Calu3 (cell line): ENCODE measurements at regions of chr12 and their contacts with region 1.

Region 1: GRCh38 chr12:59650402-59651228 is 54.8 kb downstream of the SLC16A7 start:
- DNase-seq: peak; percentile 35
- H3K4me3 Mint-ChIP-seq: peak overlapping the region; percentile 22
- H3K27ac Mint-ChIP-seq: peak overlapping the region; percentile 76
- H3K4me1 Mint-ChIP-seq: peaks cover 26% of the 10 kb centered on the region
- H3K27me3 Mint-ChIP-seq: no peaks in the 10 kb centered on the region
- CTCF ChIP-seq: no peak

Region 2: DNA sequence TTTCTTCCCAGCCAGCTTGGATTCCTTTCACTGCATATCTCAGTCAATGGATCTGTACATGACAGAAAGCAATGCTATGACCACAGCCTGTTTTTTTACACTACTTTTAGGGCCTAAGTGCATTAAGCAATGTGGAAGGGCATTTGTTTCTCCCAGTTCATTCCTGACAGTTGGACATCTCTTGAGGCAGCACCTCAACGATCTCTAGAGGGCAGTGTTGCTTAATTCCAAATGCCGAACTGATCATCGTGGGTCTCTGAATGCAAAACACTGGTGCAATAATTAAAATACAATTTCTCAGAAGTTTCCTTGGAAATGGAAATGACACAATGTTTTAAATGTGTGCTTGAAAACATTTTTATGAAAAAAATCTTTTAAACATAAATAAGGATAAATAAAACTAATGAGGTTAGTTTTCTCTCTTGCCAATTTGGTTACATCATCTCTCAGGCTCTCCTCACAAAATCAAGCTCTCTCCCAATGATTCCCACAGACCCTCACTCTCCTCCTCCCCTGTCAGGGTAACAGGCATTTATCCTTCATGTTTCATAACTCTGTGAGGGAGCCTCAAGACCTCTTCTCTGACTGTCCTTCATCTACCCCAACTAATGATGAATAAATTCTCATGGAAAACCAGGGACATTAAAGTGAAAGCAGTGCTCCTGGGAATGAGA is 247.2 kb before region 1 on chr12:
- CTCF ChIA-PET with region 1: no interaction called
- intact Hi-C with region 1: loop called (anchors 2 kb)
- DNase-seq: peak; percentile 60
- H3K4me3 Mint-ChIP-seq: peak overlapping the region; percentile 44
- H3K27ac Mint-ChIP-seq: peak overlapping the region; percentile 82
- H3K4me1 Mint-ChIP-seq: peaks cover 11% of the 10 kb centered on the region
- H3K27me3 Mint-ChIP-seq: no peaks in the 10 kb centered on the region
- CTCF ChIP-seq: peak; percentile 71

Region 3: DNA sequence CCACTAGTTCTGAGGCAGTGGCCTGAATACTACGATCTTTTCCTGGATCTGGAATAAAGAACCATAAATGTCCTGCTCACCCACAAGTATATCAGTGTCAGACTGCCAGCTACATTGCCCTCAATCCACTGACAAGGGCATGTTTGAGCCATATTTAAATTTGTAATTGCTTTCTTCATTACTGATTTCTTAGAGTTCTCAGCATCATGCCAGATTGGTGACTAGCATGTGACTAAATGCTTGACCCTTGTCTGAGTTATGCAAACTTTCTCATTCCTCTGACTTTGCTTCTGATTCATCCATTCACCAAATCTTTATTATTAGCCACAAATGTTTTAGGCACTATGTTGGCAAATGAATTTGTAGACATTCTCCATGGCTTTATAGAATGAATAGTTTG is 198.4 kb before region 1 on chr12:
- CTCF ChIA-PET with region 1: no interaction called
- intact Hi-C with region 1: loop called (anchors 2 kb)
- DNase-seq: peak; percentile 37
- H3K4me3 Mint-ChIP-seq: no peak overlapping the region
- H3K27ac Mint-ChIP-seq: peak overlapping the region; percentile 57
- H3K4me1 Mint-ChIP-seq: peaks cover 38% of the 10 kb centered on the region
- H3K27me3 Mint-ChIP-seq: no peaks in the 10 kb centered on the region
- CTCF ChIP-seq: no peak

Region 4: GRCh38 chr12:59499774-59500173 is 150.8 kb before region 1 on chr12:
- CTCF ChIA-PET with region 1: no interaction called
- intact Hi-C with region 1: loop called (anchors 2 kb)
- DNase-seq: no peak
- H3K4me3 Mint-ChIP-seq: no peak overlapping the region
- H3K27ac Mint-ChIP-seq: peak overlapping the region; percentile 50
- H3K4me1 Mint-ChIP-seq: peaks cover 31% of the 10 kb centered on the region
- H3K27me3 Mint-ChIP-seq: no peaks in the 10 kb centered on the region
- CTCF ChIP-seq: no peak

Region 5: DNA sequence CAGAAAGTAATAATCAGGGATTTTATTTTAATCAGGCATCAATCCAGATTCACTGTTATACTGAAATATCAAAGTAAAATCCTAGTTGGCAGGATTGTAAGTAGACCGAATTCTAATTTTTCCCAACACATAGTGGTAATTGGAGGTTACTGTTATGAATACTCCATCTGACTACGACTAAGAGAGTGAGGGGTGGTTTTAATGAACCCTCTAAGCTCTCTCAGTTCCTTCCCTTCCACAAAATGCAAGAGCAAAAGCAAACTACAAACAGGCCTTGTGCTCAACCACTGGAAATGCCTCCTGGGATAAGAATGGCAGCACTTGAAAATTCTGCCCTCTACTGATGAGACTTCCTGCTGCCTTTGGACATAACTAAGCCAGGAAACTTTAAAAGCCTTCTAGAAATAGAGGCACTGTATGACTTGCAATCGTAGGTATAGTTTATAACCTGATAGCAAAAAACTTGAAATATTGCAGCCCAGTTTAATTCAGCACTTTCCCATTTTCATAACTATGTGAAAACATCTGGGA is 130.1 kb after region 1 on chr12:
- CTCF ChIA-PET with region 1: no interaction called
- intact Hi-C with region 1: loop called (anchors 2 kb)
- DNase-seq: peak; percentile 26
- H3K4me3 Mint-ChIP-seq: no peak overlapping the region
- H3K27ac Mint-ChIP-seq: no peak overlapping the region
- H3K4me1 Mint-ChIP-seq: no peaks in the 10 kb centered on the region
- H3K27me3 Mint-ChIP-seq: no peaks in the 10 kb centered on the region
- CTCF ChIP-seq: peak; percentile 43

Region 6: GRCh38 chr12:59839514-59839913 is 188.9 kb after region 1 on chr12:
- CTCF ChIA-PET with region 1: no interaction called
- intact Hi-C with region 1: no loop called
- DNase-seq: no peak
- H3K4me3 Mint-ChIP-seq: no peak overlapping the region
- H3K27ac Mint-ChIP-seq: no peak overlapping the region
- H3K4me1 Mint-ChIP-seq: peaks cover 23% of the 10 kb centered on the region
- H3K27me3 Mint-ChIP-seq: no peaks in the 10 kb centered on the region
- CTCF ChIP-seq: no peak

Region 7: GRCh38 chr12:59850268-59850667 is 199.7 kb after region 1 on chr12:
- CTCF ChIA-PET with region 1: no interaction called
- intact Hi-C with region 1: no loop called
- DNase-seq: no peak
- H3K4me3 Mint-ChIP-seq: no peak overlapping the region
- H3K27ac Mint-ChIP-seq: no peak overlapping the region
- H3K4me1 Mint-ChIP-seq: no peaks in the 10 kb centered on the region
- H3K27me3 Mint-ChIP-seq: no peaks in the 10 kb centered on the region
- CTCF ChIP-seq: no peak

Region 8: GRCh38 chr12:59999291-59999690 is 348.7 kb after region 1 on chr12:
- CTCF ChIA-PET with region 1: no interaction called
- intact Hi-C with region 1: no loop called
- DNase-seq: no peak
- H3K4me3 Mint-ChIP-seq: no peak overlapping the region
- H3K27ac Mint-ChIP-seq: no peak overlapping the region
- H3K4me1 Mint-ChIP-seq: no peaks in the 10 kb centered on the region
- H3K27me3 Mint-ChIP-seq: no peaks in the 10 kb centered on the region
- CTCF ChIP-seq: no peak